ENCODE measurements at regions of chr11 and their contacts with region 1.

Region 1: DNA sequence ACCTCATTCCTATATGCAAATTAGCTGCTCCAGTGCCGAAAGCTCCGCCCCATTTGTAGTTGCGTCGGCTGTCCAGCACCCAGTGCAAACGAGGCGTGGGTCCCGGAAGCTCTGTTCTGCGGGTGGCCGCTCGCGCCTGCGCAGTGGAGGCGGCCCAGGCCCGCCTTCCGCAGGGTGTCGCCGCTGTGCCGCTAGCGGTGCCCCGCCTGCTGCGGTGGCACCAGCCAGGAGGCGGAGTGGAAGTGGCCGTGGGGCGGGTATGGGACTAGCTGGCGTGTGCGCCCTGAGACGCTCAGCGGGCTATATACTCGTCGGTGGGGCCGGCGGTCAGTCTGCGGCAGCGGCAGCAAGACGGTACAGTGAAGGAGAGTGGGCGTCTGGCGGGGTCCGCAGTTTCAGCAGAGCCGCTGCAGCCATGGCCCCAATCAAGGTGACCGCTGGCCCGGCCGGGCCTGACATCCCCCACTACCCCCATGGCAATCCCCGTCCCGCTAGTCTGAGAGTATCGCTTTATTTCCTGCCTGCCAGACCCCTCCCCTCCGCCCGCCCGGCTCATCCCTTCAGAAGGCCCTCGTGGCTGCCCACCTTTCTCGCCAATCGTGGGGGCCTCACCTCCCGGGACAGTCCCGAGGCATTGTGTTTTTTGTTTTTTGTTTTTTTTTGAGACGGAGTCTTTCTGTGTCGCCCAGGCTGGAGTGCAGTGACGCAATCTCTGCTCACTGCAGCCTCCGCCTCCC is at the start of gene PRDX5:
- DNase-seq: peak; percentile 99
- H3K4me3 Mint-ChIP-seq: peak within 1 kb of the TSS; percentile 92
- H3K27ac Mint-ChIP-seq: peak within 1 kb of the TSS; percentile 97
- H3K4me1 Mint-ChIP-seq: peaks cover 32% of the 10 kb centered on the region
- H3K27me3 Mint-ChIP-seq: no peaks in the 10 kb centered on the region
- total RNA-seq, gene PRDX5: 98.0 and 104 TPM in 2 replicates

Region 2: DNA sequence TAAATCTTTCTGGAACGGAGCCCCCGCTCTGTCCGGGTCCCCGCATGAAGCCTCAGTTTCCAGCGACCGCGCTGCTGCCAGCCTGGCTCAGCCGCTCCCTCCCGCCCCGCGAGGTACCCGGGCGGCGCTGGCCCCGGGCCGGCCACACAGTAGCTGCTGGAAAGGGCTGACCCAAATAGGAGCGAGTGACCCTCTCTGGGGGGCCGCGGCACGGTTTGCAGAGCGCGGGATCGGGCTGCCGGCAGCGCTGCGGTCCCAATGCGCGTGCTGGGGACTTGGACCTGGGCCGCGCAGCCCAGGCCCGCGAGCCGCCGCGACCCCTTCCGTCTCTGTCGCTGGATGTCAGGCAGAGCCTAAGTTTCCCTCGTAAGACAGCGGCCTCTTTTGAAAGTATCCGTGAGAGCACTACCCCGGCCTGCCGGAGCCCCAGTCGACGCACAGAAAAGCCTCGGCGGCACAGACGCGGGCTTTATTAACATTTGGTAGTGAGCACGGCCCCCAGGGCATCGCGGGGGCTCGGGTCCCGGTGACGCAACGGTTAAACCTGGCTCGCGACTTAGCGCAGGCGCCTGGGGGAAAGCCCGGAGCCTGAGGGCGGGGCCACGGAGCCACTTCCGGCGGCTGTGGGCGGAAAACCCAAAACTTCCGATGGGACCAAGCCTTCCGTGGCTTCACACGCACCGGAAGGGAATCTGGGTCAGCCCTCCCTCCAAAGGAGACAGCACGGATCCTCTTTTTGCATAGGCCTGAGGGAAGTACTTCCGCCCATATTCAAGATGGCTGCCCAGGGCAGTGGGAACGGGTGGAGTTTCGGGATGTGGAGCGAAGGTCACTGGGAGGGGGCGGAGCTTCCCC is 48.5 kb before region 1 on chr11:
- intact Hi-C with region 1: loop called (anchors 1 kb)
- DNase-seq: peak; percentile 99
- H3K4me3 Mint-ChIP-seq: peak overlapping the region; percentile 96
- H3K27ac Mint-ChIP-seq: peak overlapping the region; percentile 99
- H3K4me1 Mint-ChIP-seq: peaks cover 26% of the 10 kb centered on the region
- H3K27me3 Mint-ChIP-seq: no peaks in the 10 kb centered on the region

Region 3: DNA sequence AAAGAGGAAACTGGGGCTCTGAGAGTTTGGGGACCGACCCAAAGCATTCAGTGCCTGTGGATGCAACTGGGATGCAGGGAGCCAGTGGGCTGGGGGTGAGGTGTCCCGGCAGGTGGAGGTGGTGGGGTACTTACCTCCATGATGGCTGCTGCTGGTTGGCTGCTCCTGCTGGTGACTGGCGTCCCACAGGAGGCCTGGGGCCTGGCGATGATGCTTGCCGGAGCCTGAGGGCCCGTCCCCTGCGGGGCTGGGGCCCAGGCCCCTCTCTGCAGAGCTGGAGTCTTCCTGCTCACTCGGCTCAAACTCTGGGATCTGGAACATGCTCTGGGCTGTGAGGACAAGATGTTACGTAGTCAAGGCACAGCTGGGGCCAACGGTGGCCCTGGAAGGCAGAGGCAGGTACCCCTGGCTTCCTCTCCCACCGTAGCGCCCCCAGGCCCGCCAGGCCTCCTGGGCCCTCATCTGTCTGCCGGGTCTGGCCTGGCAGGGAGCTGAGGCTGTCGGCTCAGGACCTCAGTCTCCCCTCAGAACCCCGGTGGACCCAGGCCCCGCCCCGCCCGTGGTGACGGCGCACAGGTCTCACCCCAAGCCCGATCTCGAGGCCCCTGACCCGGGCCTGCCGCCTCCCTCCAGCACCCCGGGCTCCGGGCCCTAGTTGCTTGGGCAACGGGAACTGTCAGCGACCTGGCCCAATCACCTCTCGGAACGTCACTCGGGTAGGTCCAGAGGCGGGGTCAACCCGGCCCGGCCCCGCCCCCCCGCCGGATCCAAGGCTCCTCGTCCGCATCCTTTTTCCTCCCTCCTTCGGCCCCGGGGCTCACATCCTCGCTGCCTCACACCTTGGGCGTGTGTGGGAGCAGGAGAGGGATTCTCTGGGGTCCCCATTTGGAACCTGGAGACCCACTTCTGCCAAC is 33.8 kb before region 1 on chr11 and contains the start of gene BAD:
- intact Hi-C with region 1: loop called (anchors 1 kb)
- DNase-seq: peak; percentile 97
- H3K4me3 Mint-ChIP-seq: peak within 1 kb of the TSS; percentile 89
- H3K27ac Mint-ChIP-seq: peak within 1 kb of the TSS; percentile 94
- H3K4me1 Mint-ChIP-seq: peaks cover 17% of the 10 kb centered on the region
- H3K27me3 Mint-ChIP-seq: no peaks in the 10 kb centered on the region
- total RNA-seq, gene BAD: 34.0 and 35.5 TPM in 2 replicates

Region 4: DNA sequence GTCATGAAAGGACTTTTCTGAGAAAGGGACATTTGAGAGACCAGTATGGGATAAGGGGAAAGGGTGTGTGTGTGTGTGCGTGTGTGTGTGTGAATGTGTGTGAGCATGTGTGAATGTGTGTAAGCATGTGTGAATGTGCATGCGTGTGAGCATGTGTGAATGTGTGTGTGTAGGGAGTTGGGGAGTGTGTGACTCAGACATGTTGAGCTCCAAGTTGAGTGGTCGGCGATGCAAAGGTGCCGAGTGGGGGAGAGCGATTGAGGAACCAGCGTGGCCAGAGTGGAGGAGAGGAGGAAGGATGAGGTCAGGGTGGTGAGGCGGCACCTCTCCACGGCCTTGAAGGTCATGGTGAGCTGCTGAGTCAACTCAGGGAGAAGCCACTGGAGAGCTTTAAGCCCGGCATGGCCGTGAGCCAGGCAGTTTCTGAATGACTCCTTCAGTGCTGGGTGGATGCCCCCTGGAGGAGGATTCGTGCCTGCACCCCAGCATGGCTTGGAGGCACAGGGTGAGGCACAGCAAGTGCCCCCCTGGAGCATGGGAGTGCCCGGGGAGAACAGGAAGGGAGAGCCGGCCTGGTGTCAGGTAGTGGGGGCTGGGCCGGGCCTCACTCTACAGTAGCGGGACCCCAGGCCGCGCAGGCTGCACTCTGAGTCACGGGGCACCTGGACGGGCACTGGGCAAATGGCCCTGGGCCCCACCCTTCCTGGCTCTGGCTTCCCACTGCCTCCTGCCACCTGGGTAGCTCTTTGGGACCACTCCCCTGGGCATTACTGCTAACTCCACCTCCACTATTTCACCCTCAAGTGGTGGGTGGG is 13.6 kb after region 1 on chr11:
- intact Hi-C with region 1: loop called (anchors 1 kb)
- DNase-seq: peak; percentile 91
- H3K4me3 Mint-ChIP-seq: peak overlapping the region; percentile 39
- H3K27ac Mint-ChIP-seq: peak overlapping the region; percentile 88
- H3K4me1 Mint-ChIP-seq: peaks cover 14% of the 10 kb centered on the region
- H3K27me3 Mint-ChIP-seq: no peaks in the 10 kb centered on the region

Region 5: DNA sequence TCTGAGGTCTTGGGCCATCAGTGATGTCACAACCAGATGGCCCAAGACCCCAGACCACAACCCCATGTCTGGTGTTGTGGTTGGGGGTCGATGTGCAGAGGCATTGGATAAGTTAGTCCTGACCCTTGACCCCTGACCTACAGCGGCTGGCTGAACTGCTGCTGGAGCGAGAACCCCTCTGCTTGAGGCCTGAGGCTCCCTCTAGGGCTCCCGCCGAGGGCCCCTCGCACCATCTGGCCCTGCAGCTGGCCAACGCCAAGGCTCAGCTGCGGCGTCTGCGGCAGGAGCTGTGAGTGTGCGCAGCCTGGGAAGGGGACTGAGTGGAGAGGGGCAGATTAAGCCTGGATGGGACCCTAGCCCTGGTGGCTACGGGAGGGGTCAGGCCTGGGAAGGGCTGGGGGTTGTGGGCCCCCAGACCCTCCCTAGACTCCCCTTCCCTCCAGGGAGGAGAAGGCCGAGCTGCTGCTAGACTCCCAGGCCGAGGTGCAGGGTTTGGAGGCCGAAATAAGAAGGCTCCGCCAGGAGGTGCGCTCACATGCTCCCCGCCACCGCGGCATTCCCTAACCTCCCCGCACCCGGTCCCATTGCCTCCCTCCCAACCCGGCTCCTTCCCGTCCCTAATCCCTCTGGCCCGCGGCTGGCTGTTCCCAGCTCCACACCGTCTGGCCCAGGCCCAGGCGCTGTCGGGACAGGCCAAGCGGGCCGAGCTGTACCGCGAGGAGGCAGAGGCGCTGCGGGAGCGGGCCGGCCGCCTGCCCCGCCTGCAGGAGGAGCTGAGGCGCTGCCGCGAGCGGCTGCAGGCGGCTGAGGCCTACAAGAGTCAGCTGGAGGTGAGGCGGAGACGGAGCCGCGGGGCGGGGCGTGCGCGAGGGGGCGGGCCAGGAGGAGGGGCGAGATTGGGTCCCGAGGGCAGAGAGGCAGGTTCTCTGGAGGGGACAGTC is 24.0 kb after region 1 on chr11:
- intact Hi-C with region 1: loop called (anchors 1 kb)
- DNase-seq: peak; percentile 98
- H3K4me3 Mint-ChIP-seq: peak overlapping the region; percentile 99
- H3K27ac Mint-ChIP-seq: no peak overlapping the region
- H3K4me1 Mint-ChIP-seq: peaks cover 31% of the 10 kb centered on the region
- H3K27me3 Mint-ChIP-seq: no peaks in the 10 kb centered on the region

Region 6: DNA sequence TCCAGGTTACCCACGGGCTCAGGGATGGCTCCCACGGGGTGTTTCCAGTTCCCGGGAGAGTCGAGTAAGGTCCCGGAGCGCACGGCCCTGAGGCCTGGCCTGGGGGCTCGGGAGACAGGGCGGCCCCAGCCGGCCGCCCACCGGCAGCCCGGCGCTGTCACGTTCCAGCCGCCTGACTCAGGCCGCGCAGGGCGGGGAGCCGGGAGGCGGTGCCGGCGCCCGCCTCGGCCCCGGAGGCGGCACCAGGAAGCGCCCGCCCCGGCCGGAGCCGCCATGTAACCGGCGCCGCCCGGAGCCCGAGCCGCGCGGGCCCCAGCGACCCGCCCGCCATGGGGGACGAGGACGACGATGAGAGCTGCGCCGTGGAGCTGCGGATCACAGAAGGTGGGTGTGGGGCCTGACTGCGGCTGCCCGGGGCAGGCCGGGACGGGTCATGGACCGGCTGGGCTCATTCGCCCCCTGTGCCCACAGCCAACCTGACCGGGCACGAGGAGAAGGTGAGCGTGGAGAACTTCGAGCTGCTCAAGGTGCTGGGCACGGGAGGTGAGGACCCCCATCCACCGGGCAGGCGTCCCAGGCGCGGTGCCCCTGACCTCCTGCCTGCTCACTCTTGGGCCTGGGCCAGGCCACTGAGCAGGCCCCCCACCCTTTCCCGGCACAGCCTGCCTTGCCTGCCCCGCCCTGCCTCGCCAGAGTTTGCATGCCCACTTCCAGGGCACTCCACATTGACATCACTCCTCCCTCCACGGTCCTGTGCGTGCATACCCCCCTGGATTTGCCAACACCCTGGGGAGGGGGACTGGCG is 41.0 kb after region 1 on chr11 and contains the start of gene RPS6KA4:
- intact Hi-C with region 1: loop called (anchors 1 kb)
- DNase-seq: peak; percentile 90
- H3K4me3 Mint-ChIP-seq: peak within 1 kb of the TSS; percentile 94
- H3K27ac Mint-ChIP-seq: peak within 1 kb of the TSS; percentile 88
- H3K4me1 Mint-ChIP-seq: peaks cover 20% of the 10 kb centered on the region
- H3K27me3 Mint-ChIP-seq: no peaks in the 10 kb centered on the region
- total RNA-seq, gene RPS6KA4: 46.3 and 48.6 TPM in 2 replicates